ENCODE measurements at regions of chr11 and their contacts with region 1.

Region 1: GRCh38 chr11:63671322-63672155 is at the start of gene ATL3:
- DNase-seq: peak; percentile 99
- H3K4me3 ChIP-seq: peak within 1 kb of the TSS; percentile 92
- H3K4me3 Mint-ChIP-seq: peak within 1 kb of the TSS; percentile 82
- H3K27ac Mint-ChIP-seq: peak within 1 kb of the TSS; percentile 67
- H3K4me1 ChIP-seq: peaks cover 19% of the 10 kb centered on the region
- H3K4me1 Mint-ChIP-seq: peaks cover 18% of the 10 kb centered on the region
- H3K27me3 ChIP-seq: no peaks in the 10 kb centered on the region
- H3K27me3 Mint-ChIP-seq: no peaks in the 10 kb centered on the region
- CTCF ChIP-seq: peak; percentile 4 to 17
- total RNA-seq, gene ATL3: 50.2 and 55.1 TPM in 2 replicates

Region 2: GRCh38 chr11:62880803-62881578 is 790.5 kb before region 1 on chr11 and contains the start of gene SLC3A2:
- CTCF ChIA-PET with region 1: interaction called, 12 read pairs
- POLR2A ChIA-PET with region 1: no interaction called
- intact Hi-C with region 1: no loop called
- DNase-seq: peak; percentile 87 to 92
- H3K4me3 ChIP-seq: peak within 1 kb of the TSS; percentile 99
- H3K4me3 Mint-ChIP-seq: peak within 1 kb of the TSS; percentile 97
- H3K27ac Mint-ChIP-seq: peak within 1 kb of the TSS; percentile 99
- H3K4me1 ChIP-seq: peaks cover 51% of the 10 kb centered on the region
- H3K4me1 Mint-ChIP-seq: peaks cover 43% of the 10 kb centered on the region
- H3K27me3 ChIP-seq: no peaks in the 10 kb centered on the region
- H3K27me3 Mint-ChIP-seq: no peaks in the 10 kb centered on the region
- CTCF ChIP-seq: peak; percentile 77 to 78
- total RNA-seq, gene SLC3A2: 763 and 879 TPM in 2 replicates

Region 3: GRCh38 chr11:63478896-63479295 is 192.6 kb before region 1 on chr11:
- CTCF ChIA-PET with region 1: no interaction called
- POLR2A ChIA-PET with region 1: no interaction called
- intact Hi-C with region 1: no loop called
- DNase-seq: peak; percentile 74 to 80
- H3K4me3 ChIP-seq: no peak overlapping the region
- H3K4me3 Mint-ChIP-seq: no peak overlapping the region
- H3K27ac Mint-ChIP-seq: no peak overlapping the region
- H3K4me1 ChIP-seq: peaks cover 12% of the 10 kb centered on the region; the same call in 1 of the 2 replicates
- H3K4me1 Mint-ChIP-seq: no peaks in the 10 kb centered on the region
- H3K27me3 ChIP-seq: no peaks in the 10 kb centered on the region
- H3K27me3 Mint-ChIP-seq: no peaks in the 10 kb centered on the region
- CTCF ChIP-seq: peak; percentile 94

Region 4: GRCh38 chr11:63553741-63554151 is 117.8 kb before region 1 on chr11:
- CTCF ChIA-PET with region 1: no interaction called
- POLR2A ChIA-PET with region 1: no interaction called
- intact Hi-C with region 1: no loop called
- DNase-seq: no peak
- H3K4me3 ChIP-seq: no peak overlapping the region
- H3K4me3 Mint-ChIP-seq: no peak overlapping the region
- H3K27ac Mint-ChIP-seq: no peak overlapping the region
- H3K4me1 ChIP-seq: peaks cover 6% of the 10 kb centered on the region
- H3K4me1 Mint-ChIP-seq: no peaks in the 10 kb centered on the region
- H3K27me3 ChIP-seq: no peaks in the 10 kb centered on the region
- H3K27me3 Mint-ChIP-seq: no peaks in the 10 kb centered on the region
- CTCF ChIP-seq: no peak

Region 5: DNA sequence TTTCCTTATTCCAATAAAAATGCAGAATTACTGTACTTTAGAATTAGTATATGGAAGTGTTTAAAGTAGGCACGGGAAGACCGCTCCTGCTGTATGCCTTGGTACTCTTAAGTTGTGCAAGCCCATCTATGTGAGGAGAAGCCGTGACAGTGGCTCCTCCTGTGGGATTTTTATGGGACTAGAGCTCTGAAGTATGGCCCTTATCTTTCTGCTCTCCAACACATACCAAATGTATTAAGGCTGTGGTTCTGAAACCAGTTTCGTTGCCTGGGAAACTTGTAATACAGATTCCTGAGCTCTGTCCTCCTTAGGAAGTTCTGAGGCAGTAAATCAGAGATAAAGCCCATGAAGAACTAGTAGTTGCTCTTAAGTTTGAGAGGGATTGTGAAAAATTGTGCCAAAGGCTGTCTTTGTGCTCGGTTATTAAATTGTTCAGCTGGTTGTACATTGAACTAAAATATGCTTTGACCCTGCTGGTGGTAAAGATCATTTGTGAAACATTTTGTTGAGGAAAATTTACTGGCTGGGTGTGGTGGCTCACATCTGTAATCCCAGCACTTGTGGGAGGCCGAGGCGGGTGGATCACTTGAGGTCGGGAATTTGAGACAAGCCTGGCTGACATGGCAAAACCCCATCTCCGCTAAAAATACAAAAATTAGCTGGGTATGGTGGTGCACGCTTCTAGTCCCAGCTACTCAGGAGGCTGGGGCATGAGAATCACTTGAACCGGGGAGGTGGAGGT is 39.1 kb after region 1 on chr11:
- CTCF ChIA-PET with region 1: interaction called, 12 read pairs
- POLR2A ChIA-PET with region 1: interaction called, 3 read pairs
- intact Hi-C with region 1: loop called (anchors 1 kb)
- DNase-seq: peak; percentile 76 to 82
- H3K4me3 ChIP-seq: no peak overlapping the region
- H3K4me3 Mint-ChIP-seq: peak overlapping the region; percentile 64
- H3K27ac Mint-ChIP-seq: peak overlapping the region; percentile 98
- H3K4me1 ChIP-seq: peaks cover 8% of the 10 kb centered on the region
- H3K4me1 Mint-ChIP-seq: peaks cover 17% of the 10 kb centered on the region
- H3K27me3 ChIP-seq: no peaks in the 10 kb centered on the region
- H3K27me3 Mint-ChIP-seq: no peaks in the 10 kb centered on the region
- CTCF ChIP-seq: peak; percentile 41 to 43

Region 6: DNA sequence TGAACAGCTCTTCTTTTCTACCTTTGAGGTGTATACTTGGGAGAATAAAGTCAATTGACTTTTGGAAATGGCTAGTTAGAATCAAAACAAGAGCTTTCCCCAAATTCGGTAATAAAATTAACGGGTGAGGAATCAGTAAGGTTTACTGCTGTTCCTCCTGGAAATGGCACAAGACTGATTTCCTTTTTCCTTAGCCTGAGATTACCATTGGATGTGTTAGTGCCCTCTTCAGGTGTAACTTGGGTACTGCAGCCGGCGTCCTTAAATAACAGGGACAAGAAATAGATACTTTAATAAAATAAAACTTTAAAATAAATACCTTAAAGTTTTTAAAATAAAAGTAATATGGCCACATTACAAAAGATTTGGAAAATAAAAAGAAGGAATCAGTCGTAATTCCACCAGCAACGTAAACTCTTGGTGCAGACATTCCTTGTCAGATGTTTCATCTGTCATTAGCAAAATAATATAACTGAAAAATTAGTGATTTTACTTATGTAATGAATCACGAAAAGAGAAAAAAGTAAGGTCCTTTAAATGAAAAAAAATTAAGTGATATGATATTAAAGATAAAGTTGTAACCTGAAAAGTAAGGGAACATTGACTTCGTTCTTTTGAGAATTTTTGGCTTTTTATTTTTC is 67.3 kb after region 1 on chr11:
- CTCF ChIA-PET with region 1: no interaction called
- POLR2A ChIA-PET with region 1: no interaction called
- intact Hi-C with region 1: loop called (anchors 2 kb)
- DNase-seq: peak; percentile 65 to 75
- H3K4me3 ChIP-seq: no peak overlapping the region
- H3K4me3 Mint-ChIP-seq: no peak overlapping the region
- H3K27ac Mint-ChIP-seq: no peak overlapping the region
- H3K4me1 ChIP-seq: peaks cover 12% of the 10 kb centered on the region; the same call in 1 of the 2 replicates
- H3K4me1 Mint-ChIP-seq: peaks cover 12% of the 10 kb centered on the region
- H3K27me3 ChIP-seq: no peaks in the 10 kb centered on the region
- H3K27me3 Mint-ChIP-seq: no peaks in the 10 kb centered on the region
- CTCF ChIP-seq: peak; percentile 93 to 96

Region 7: GRCh38 chr11:63783925-63784592 is 112.5 kb after region 1 on chr11:
- CTCF ChIA-PET with region 1: no interaction called
- POLR2A ChIA-PET with region 1: no interaction called
- intact Hi-C with region 1: no loop called
- DNase-seq: peak in 1 of 2 experiments; percentile 37
- H3K4me3 ChIP-seq: no peak overlapping the region
- H3K4me3 Mint-ChIP-seq: no peak overlapping the region
- H3K27ac Mint-ChIP-seq: no peak overlapping the region
- H3K4me1 ChIP-seq: peaks cover 25% of the 10 kb centered on the region
- H3K4me1 Mint-ChIP-seq: peaks cover 10% of the 10 kb centered on the region
- H3K27me3 ChIP-seq: no peaks in the 10 kb centered on the region
- H3K27me3 Mint-ChIP-seq: no peaks in the 10 kb centered on the region
- CTCF ChIP-seq: no peak

Region 8: DNA sequence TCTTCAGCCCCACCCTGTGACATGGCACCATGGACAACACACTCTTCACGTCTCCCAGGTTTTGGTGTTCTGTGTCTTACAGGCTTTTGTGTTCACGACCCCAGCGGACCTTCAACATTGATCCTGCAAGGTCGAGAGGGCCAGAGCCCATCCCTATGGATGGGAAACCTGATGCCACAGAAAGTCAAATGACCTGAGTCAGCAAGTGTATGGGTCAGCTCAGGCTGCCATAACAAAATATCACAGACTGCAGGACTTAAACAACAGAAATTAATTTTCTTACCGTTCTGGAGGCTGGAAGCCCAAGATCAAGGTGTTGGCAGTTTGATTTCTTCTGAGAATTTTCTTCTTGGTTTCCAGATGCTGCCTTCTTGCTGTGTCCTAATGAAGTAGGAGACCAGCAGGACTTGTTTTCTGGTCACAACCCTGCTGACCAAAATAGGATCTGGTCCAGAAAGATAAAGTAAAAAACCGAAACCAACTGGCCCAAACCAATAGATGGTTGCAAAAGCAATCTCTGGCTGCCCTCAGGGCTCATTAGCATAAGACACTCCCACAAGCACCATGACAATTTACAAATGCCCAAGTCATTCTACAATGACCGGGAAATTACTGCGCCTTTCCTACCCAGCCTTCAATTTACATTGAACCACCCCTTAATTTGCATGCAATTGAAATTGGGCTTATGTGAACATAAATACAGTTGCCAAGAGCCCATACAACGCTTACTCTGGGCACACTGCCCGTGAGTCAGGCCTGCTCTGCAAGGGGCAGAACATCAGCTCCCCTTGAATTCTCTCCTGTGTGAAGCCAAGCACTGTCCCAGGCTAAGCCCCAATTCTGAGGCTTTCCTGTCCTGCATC is 801.3 kb after region 1 on chr11:
- CTCF ChIA-PET with region 1: no interaction called
- POLR2A ChIA-PET with region 1: no interaction called
- intact Hi-C with region 1: no loop called
- DNase-seq: no peak
- H3K4me3 ChIP-seq: no peak overlapping the region
- H3K4me3 Mint-ChIP-seq: no peak overlapping the region
- H3K27ac Mint-ChIP-seq: no peak overlapping the region
- H3K4me1 ChIP-seq: no peaks in the 10 kb centered on the region
- H3K4me1 Mint-ChIP-seq: no peaks in the 10 kb centered on the region
- H3K27me3 ChIP-seq: no peaks in the 10 kb centered on the region
- H3K27me3 Mint-ChIP-seq: peaks cover 13% of the 10 kb centered on the region
- CTCF ChIP-seq: no peak

Measured in Caco-2 (cell line).